ENCODE measurements at regions of chr5 and their contacts with region 1.

Region 1: GRCh38 chr5:146426853-146427618 is 20.1 kb upstream of the TCERG1 start:
- DNase-seq: peak; percentile 76
- H3K4me3 ChIP-seq: no peak overlapping the region
- H3K27ac ChIP-seq: no peak overlapping the region
- H3K4me1 ChIP-seq: no peaks in the 10 kb centered on the region
- H3K27me3 ChIP-seq: peaks cover 23% of the 10 kb centered on the region; the same call in 1 of the 2 replicates

Region 2: GRCh38 chr5:146291421-146292074 is 135.5 kb before region 1 on chr5:
- in situ Hi-C with region 1: loop called (anchors 10 kb)
- DNase-seq: peak; percentile 65
- H3K4me3 ChIP-seq: no peak overlapping the region
- H3K27ac ChIP-seq: no peak overlapping the region
- H3K4me1 ChIP-seq: no peaks in the 10 kb centered on the region
- H3K27me3 ChIP-seq: no peaks in the 10 kb centered on the region